AG04450 (cell line): ENCODE measurements at regions of chr2 and their contacts with region 1.

Region 1: GRCh38 chr2:149561309-149561926 is 26.2 kb downstream of the MMADHC start:
- DNase-seq: no peak
- H3K4me3 ChIP-seq: no peak overlapping the region
- H3K27ac ChIP-seq: no peak overlapping the region
- H3K27me3 ChIP-seq: no peaks in the 10 kb centered on the region
- CTCF ChIP-seq: peak; percentile 77

Region 2: GRCh38 chr2:149006883-149007540 is 554.4 kb before region 1 on chr2:
- CTCF ChIA-PET with region 1: interaction called, 15 read pairs
- POLR2A ChIA-PET with region 1: no interaction called
- DNase-seq: no peak
- H3K4me3 ChIP-seq: no peak overlapping the region
- H3K27ac ChIP-seq: no peak overlapping the region
- H3K27me3 ChIP-seq: peaks cover 6% of the 10 kb centered on the region
- CTCF ChIP-seq: no peak

Region 3: GRCh38 chr2:149346272-149346671 is 215.1 kb before region 1 on chr2:
- CTCF ChIA-PET with region 1: no interaction called
- POLR2A ChIA-PET with region 1: no interaction called
- DNase-seq: no peak
- H3K4me3 ChIP-seq: no peak overlapping the region
- H3K27ac ChIP-seq: no peak overlapping the region
- H3K27me3 ChIP-seq: no peaks in the 10 kb centered on the region
- CTCF ChIP-seq: no peak

Region 4: GRCh38 chr2:149573760-149574159 is 12.3 kb after region 1 on chr2:
- CTCF ChIA-PET with region 1: interaction called, 19 read pairs
- POLR2A ChIA-PET with region 1: no interaction called
- DNase-seq: no peak
- H3K4me3 ChIP-seq: no peak overlapping the region
- H3K27ac ChIP-seq: no peak overlapping the region
- H3K27me3 ChIP-seq: no peaks in the 10 kb centered on the region
- CTCF ChIP-seq: peak; percentile 50